ENCODE measurements at regions of chrX and their contacts with region 1.

Region 1: DNA sequence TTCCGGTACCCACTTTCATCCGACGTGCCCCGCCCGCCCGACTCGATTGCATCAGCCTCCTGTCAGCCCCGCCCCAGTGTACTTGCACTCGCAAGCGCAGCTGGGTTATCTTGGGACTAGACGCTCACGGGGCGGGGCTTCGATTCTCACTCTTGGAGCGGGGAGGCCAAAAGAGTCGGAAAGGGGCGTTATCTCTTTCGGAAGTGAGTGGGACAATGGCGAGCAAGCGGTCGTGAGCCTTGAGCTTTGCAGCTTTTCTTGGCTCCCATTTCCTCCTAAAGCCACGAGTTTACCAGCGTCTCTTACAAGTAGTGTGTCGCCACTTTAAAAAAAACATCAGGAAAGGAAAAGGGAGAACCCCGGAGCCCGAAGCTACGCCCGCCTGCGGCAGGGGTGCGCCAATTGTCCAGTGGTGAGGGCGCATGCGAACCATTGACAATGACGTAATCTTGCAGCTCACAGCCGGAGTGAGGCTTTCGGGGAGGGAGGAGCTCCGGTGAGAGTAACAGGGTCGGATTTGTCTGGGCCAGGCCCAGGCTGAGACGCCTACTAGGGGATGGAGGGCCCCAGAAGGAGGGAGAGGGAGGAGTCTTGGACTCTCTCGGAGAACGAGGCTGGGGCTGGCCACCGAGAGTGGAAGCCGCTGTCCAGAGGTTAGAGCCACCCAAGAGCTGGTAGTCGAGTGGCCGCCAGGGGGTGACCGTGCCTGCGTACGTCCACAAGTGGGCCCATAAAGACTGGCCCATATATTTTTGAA is 109.5 kb downstream of the GNL3L start:
- DNase-seq: peak; percentile 92
- H3K4me3 ChIP-seq: peak overlapping the region; percentile 67
- H3K27ac ChIP-seq: peak overlapping the region; percentile 97
- H3K27me3 ChIP-seq: no peaks in the 10 kb centered on the region
- CTCF ChIP-seq: peak; percentile 58

Region 2: GRCh38 chrX:54564936-54565335 is 74.6 kb before region 1 on chrX:
- CTCF ChIA-PET with region 1: no interaction called
- POLR2A ChIA-PET with region 1: no interaction called
- DNase-seq: no peak
- H3K4me3 ChIP-seq: no peak overlapping the region
- H3K27ac ChIP-seq: no peak overlapping the region
- H3K27me3 ChIP-seq: no peaks in the 10 kb centered on the region
- CTCF ChIP-seq: no peak

Region 3: DNA sequence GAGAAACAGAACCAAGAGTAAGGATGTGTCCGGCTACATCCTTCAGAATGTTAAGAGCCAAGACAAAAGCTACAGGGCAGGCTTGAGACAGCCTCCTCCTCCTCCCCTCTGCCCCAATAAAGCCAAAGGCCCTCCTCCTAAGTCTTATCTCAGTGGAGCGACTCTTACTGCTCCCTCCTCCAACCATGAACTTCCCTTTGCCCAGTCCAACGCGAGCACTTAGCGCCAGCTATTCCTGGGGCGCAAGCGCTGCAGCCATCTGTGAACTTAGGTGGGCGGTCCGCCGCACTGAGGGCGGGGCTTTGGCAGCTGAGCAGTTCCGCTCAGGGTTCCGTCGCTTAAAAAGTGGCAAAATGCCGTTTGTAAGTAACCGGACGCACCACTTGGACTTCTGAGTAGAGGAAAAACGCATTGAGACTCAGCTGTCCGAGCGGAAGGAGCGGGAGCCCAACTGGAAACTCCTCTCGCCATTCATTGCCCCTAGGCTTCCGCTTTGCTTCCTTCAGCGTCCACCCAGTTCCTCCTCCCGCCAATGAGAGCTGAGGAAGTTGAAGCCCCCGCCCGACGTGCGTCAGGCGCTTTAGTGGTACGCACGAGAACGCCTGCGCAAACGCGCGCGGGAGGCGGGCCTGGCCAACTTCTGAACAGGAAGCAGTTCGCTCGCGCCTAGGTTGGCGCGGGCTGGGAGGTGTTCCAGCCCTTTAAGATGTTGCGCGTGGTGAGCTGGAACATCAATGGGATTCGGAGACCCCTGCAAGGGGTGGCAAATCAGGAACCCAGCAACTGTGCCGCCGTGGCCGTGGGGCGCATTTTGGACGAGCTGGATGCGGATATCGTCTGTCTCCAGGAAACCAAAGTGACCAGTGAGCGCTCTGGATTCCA is 360.4 kb after region 1 on chrX and contains the start of gene APEX2:
- CTCF ChIA-PET with region 1: interaction called, 3 read pairs
- POLR2A ChIA-PET with region 1: interaction called, 10 read pairs
- DNase-seq: peak; percentile 77
- H3K4me3 ChIP-seq: peak within 1 kb of the TSS; percentile 78
- H3K27ac ChIP-seq: peak within 1 kb of the TSS; percentile 93
- H3K27me3 ChIP-seq: no peaks in the 10 kb centered on the region
- CTCF ChIP-seq: no peak
- polyA plus RNA-seq, gene APEX2: 15.0 and 15.8 TPM in 2 replicates